Head of caudate nucleus (tissue), 42 donors: ENCODE measurements at regions of chr3 and their contacts with region 1.

Region 1: GRCh38 chr3:15797642-15798303 is at the start of gene ANKRD28:
- DNase-seq: peak in 11 of 42 donors; percentile 11 to 57 (median 38)

Region 2: GRCh38 chr3:15629860-15630597 is 167.7 kb before region 1 on chr3:
- intact Hi-C with region 1: loop called (anchors 5 kb)
- DNase-seq: peak in 40 of 42 donors; percentile 48 to 91 (median 80)

Region 3: GRCh38 chr3:15831930-15832329 is 34.2 kb after region 1 on chr3:
- intact Hi-C with region 1: no loop called
- DNase-seq: no peak